CD8-positive, alpha-beta T cell (primary cell): ENCODE measurements at regions of chr1 and their contacts with region 1.

Region 1: DNA sequence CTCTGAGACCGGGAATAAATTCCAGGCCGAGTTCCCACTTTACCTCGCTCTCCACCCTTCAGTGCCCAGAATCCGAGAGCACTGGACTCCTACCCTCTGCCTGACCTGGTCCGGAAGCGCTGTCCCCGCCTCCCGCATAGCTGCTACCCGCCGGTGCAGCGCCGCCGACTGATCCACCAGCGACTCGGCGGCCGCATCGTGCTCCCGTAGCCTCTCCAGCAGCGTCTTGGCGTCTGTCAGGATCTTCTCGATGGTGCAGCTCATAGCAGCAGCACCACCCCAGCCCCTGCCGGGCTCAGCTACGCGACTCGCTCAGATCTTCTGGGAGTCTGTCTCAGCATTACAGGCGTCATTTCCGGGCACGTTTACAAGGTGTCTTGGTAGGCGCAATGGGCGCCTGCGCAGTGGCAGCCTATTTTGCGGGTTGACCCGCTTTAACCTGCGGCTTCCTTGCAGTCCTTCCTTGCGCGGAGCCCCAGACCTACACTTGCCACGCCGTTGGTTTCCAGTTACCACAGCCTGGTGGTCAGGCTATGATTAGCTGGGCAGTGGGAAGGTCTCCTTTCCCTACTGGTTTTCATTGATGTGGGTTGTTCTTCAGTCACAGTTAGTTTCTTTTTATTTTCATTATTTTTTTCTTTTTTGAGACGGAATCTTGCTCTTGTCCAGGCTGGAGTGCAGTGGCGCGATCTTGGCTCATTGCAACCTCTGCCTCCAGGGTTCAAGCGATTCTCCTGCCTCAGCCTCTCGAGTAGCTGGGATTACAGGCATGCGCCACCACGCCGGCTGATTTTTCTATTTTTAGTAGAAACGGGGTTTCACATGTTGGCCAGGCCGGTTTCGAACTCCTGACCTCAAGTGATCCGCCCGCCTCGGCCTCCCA is at the start of gene SIKE1:
- DNase-seq: peak; percentile 87 to 98 (median 94)
- ATAC-seq: peak; percentile 97
- H3K4me3 ChIP-seq: peak within 1 kb of the TSS; percentile 86 to 92
- H3K4me3 Mint-ChIP-seq: peak within 1 kb of the TSS; percentile 100
- H3K27ac ChIP-seq: peak within 1 kb of the TSS; percentile 91 to 93
- H3K27ac Mint-ChIP-seq: peak within 1 kb of the TSS; percentile 99
- H3K4me1 ChIP-seq: peaks cover 15% of the 10 kb centered on the region
- H3K4me1 Mint-ChIP-seq: peaks cover 35% of the 10 kb centered on the region
- H3K27me3 ChIP-seq: no peaks in the 10 kb centered on the region
- H3K27me3 Mint-ChIP-seq: no peaks in the 10 kb centered on the region
- CTCF ChIP-seq: no peak
- total RNA-seq, gene SIKE1: 64.4 to 66.6 TPM

Region 2: GRCh38 chr1:113389953-113390834 is 1390.4 kb before region 1 on chr1 and contains the start of gene MAGI3:
- CTCF ChIA-PET with region 1: no interaction called
- POLR2A ChIA-PET with region 1: no interaction called
- intact Hi-C with region 1: loop called in 1 of 2 experiments (anchors 10 kb)
- DNase-seq: peak; percentile 70 to 93 (median 88)
- ATAC-seq: peak; percentile 91
- H3K4me3 ChIP-seq: peak within 1 kb of the TSS; percentile 94 to 97
- H3K4me3 Mint-ChIP-seq: peak within 1 kb of the TSS; percentile 95
- H3K27ac ChIP-seq: peak within 1 kb of the TSS; percentile 30 to 47
- H3K27ac Mint-ChIP-seq: peak within 1 kb of the TSS; percentile 84
- H3K4me1 ChIP-seq: peaks cover 13% of the 10 kb centered on the region
- H3K4me1 Mint-ChIP-seq: peaks cover 24% of the 10 kb centered on the region
- H3K27me3 ChIP-seq: peaks cover 0 to 5% of the 10 kb centered on the region in 2 experiments
- H3K27me3 Mint-ChIP-seq: peaks cover 12% of the 10 kb centered on the region
- CTCF ChIP-seq: no peak
- total RNA-seq, gene MAGI3: 1.7 to 3.2 TPM

Region 3: DNA sequence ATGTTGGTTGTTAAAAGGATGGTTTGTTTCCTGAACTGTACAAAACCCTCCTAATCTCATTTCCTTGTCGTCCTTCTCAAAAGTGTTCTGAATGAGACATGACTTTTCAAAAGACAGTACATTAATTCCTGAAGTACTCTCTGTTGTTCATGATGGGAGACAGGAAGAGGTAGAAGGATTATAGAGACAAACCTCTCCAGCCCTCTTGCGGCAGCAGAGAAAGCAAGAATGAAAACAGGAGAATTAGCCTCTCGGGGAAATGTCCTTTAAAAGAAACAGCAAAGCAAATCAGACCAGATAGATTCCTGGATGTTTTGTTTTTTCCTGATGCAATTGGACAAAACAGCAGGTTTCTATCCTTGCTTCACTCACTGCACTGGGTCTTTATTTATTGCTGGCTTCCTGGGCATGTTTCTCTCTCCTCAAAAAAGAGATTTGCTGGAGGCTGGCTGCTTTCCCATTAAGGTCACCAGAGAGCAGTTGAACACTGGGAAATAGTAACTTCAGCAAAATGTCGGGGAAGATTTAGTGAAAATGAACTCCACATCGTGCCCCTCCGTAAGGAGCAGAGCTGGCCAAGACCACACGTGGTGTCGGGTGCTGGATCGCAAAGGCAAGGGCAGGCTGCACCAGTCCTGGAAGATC is 481.1 kb before region 1 on chr1:
- CTCF ChIA-PET with region 1: no interaction called
- POLR2A ChIA-PET with region 1: no interaction called
- intact Hi-C with region 1: no loop called
- DNase-seq: no peak
- ATAC-seq: no peak
- H3K4me3 ChIP-seq: no peak overlapping the region
- H3K4me3 Mint-ChIP-seq: no peak overlapping the region
- H3K27ac ChIP-seq: no peak overlapping the region
- H3K27ac Mint-ChIP-seq: no peak overlapping the region
- H3K4me1 ChIP-seq: no peaks in the 10 kb centered on the region
- H3K4me1 Mint-ChIP-seq: peaks cover 9% of the 10 kb centered on the region
- H3K27me3 ChIP-seq: no peaks in the 10 kb centered on the region
- H3K27me3 Mint-ChIP-seq: no peaks in the 10 kb centered on the region
- CTCF ChIP-seq: no peak

Region 4: GRCh38 chr1:114670083-114671010 is 110.2 kb before region 1 on chr1:
- CTCF ChIA-PET with region 1: no interaction called
- POLR2A ChIA-PET with region 1: interaction called, 3 read pairs
- intact Hi-C with region 1: loop called in 1 of 2 experiments (anchors 1 kb)
- DNase-seq: peak in 8 of 9 experiments; percentile 2 to 90 (median 86)
- ATAC-seq: peak; percentile 96
- H3K4me3 ChIP-seq: peak overlapping the region; percentile 77 to 79
- H3K4me3 Mint-ChIP-seq: peak overlapping the region; percentile 98
- H3K27ac ChIP-seq: peak overlapping the region in 1 of 2 experiments; percentile 49
- H3K27ac Mint-ChIP-seq: peak overlapping the region; percentile 92
- H3K4me1 ChIP-seq: peaks cover 5% of the 10 kb centered on the region
- H3K4me1 Mint-ChIP-seq: peaks cover 14% of the 10 kb centered on the region
- H3K27me3 ChIP-seq: no peaks in the 10 kb centered on the region
- H3K27me3 Mint-ChIP-seq: peaks cover 11% of the 10 kb centered on the region
- CTCF ChIP-seq: no peak

Region 5: DNA sequence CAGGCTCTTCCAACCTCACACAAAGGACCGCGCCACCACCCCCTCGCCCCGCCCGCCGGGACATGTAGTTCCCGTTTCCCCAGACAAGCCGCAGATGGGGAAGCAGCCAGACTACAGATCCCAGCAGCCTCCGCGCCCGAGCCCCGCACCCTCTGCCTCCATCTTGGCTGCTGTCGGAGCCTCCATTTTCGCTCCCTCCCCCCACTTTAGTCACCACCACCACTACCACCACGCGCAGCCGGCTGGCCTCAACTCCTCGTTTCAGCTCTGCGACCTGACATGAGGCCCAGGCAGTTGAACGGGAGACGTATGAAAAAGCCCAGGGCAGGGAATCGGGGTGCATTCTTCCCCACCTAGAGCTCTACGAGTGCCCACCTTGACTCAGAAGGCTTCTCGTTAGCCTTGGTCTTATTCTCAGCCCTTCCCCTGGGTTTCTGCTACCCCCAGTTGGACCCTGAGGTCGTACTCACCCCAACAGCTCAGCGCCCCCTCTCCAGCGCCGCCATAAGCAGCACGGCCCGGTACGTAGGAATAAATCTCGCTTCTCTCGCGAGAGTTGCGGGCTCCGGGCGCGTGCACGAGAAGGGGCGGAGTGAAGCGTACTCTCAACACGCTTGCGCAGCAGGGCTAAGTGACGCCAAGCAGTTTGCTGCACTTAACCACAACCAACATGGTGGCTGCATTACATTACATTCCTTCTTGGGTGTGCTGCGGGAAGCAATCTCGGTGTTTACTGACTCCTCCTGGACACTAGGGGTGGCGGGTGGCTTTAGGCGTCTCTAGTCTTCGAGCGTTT is 22.9 kb before region 1 on chr1 and contains the start of gene CSDE1:
- CTCF ChIA-PET with region 1: interaction called, 3 read pairs
- POLR2A ChIA-PET with region 1: interaction called, 18 read pairs
- intact Hi-C with region 1: loop called (anchors 1 kb)
- DNase-seq: peak; percentile 94 to 99 (median 97)
- ATAC-seq: peak; percentile 79
- H3K4me3 ChIP-seq: peak within 1 kb of the TSS; percentile 95 to 100
- H3K4me3 Mint-ChIP-seq: peak within 1 kb of the TSS; percentile 100
- H3K27ac ChIP-seq: peak within 1 kb of the TSS; percentile 97 to 100
- H3K27ac Mint-ChIP-seq: peak within 1 kb of the TSS; percentile 100
- H3K4me1 ChIP-seq: peaks cover 44% of the 10 kb centered on the region
- H3K4me1 Mint-ChIP-seq: peaks cover 51% of the 10 kb centered on the region
- H3K27me3 ChIP-seq: no peaks in the 10 kb centered on the region
- H3K27me3 Mint-ChIP-seq: no peaks in the 10 kb centered on the region
- CTCF ChIP-seq: no peak
- total RNA-seq, gene CSDE1: 732 to 774 TPM

Region 6: DNA sequence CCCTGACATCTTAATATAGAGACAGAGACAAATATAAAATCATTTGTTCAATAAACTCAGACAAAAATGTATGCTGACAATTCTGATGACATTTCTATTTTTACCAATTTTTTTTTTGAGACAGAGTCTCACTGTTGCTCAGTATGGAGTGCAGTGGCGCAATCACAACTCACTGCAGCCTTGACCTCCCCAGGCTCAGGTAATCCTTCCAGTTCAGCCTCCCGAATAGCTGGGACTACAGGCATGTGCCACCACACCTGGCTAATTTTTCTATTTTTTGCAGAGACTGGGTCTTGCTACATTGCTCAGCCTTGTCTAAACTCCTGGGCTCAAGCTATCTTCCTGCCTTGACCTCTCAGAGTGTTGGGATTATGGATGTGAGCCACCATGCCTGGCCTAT is 13.5 kb after region 1 on chr1:
- CTCF ChIA-PET with region 1: no interaction called
- POLR2A ChIA-PET with region 1: no interaction called
- intact Hi-C with region 1: no loop called
- DNase-seq: no peak
- ATAC-seq: no peak
- H3K4me3 ChIP-seq: no peak overlapping the region
- H3K4me3 Mint-ChIP-seq: no peak overlapping the region
- H3K27ac ChIP-seq: no peak overlapping the region
- H3K27ac Mint-ChIP-seq: no peak overlapping the region
- H3K4me1 ChIP-seq: no peaks in the 10 kb centered on the region
- H3K4me1 Mint-ChIP-seq: no peaks in the 10 kb centered on the region
- H3K27me3 ChIP-seq: peaks cover 0 to 3% of the 10 kb centered on the region in 2 experiments
- H3K27me3 Mint-ChIP-seq: peaks cover 21% of the 10 kb centered on the region
- CTCF ChIP-seq: no peak

Region 7: DNA sequence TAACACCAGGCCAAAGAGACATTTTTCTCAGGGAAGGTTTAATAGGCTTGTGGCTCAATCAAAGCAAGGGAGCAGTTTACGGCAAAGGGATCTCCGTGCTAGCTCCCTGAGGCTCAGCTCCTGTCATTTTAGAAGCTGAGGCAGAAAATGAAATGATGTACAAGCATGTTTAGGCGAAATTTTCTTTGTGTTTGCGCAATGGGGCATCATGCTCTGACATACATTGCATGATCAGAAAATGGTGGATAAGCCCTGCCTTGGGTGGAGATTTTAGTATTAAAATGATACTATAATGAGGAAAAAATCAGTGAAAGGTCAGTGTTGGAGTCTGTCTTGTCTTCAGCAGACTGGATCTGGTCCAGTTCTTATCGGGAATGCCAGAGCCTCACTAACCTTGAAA is 168.4 kb after region 1 on chr1:
- CTCF ChIA-PET with region 1: no interaction called
- POLR2A ChIA-PET with region 1: no interaction called
- intact Hi-C with region 1: no loop called
- DNase-seq: no peak
- ATAC-seq: no peak
- H3K4me3 ChIP-seq: no peak overlapping the region
- H3K4me3 Mint-ChIP-seq: no peak overlapping the region
- H3K27ac ChIP-seq: no peak overlapping the region
- H3K27ac Mint-ChIP-seq: no peak overlapping the region
- H3K4me1 ChIP-seq: no peaks in the 10 kb centered on the region
- H3K4me1 Mint-ChIP-seq: no peaks in the 10 kb centered on the region
- H3K27me3 ChIP-seq: no peaks in the 10 kb centered on the region
- H3K27me3 Mint-ChIP-seq: peaks cover 2% of the 10 kb centered on the region
- CTCF ChIP-seq: no peak

Region 8: DNA sequence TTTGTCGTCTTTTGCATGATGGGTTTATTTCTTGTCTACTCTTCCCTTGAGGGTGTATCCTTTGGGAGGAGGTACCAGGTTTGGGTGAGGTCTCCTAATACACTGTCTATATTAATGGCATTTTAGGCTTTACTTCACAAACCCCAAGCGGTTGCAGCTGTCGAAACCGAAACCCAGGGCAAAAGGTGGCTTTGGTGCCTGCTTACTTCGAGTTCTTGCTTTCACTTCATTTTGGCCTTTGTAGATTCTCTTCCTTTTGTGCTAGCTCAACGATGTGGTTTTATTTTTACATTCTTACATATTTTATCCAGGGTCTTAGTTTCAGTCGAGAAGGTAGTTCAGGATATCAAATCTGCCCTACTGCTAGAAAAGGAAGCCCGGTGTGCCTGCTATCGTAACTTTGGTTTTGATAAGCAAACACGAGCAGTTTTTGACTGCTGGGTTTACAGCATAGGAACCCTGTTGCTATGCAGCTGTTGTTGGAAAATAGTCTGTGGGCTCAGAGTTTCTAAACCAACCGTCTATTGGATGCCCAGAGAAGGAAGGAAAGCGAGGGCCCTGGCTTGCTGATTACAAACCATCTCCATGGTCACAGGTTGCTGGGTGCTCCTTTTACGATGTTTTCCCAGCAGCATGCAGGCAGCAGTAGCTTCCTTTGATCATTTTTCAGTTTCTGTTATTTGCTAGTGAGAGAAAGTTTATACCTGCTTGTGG is 318.6 kb after region 1 on chr1:
- CTCF ChIA-PET with region 1: no interaction called
- POLR2A ChIA-PET with region 1: no interaction called
- intact Hi-C with region 1: loop called (anchors 2 to 5 kb)
- DNase-seq: peak; percentile 55 to 96 (median 74)
- ATAC-seq: peak; percentile 89
- H3K4me3 ChIP-seq: peak overlapping the region; percentile 51 to 56
- H3K4me3 Mint-ChIP-seq: peak overlapping the region; percentile 86
- H3K27ac ChIP-seq: peak overlapping the region; percentile 95
- H3K27ac Mint-ChIP-seq: peak overlapping the region; percentile 97
- H3K4me1 ChIP-seq: peaks cover 27% of the 10 kb centered on the region
- H3K4me1 Mint-ChIP-seq: peaks cover 36% of the 10 kb centered on the region
- H3K27me3 ChIP-seq: no peaks in the 10 kb centered on the region
- H3K27me3 Mint-ChIP-seq: no peaks in the 10 kb centered on the region
- CTCF ChIP-seq: no peak